SK-N-SH (cell line): ENCODE measurements at regions of chr3 and their contacts with region 1.

Region 1: GRCh38 chr3:17412950-17413530 is 329.4 kb downstream of the TBC1D5 start:
- DNase-seq: peak; percentile 20
- H3K4me3 ChIP-seq: no peak overlapping the region; a peak in 1 of 4 replicates
- H3K27ac ChIP-seq: no peak overlapping the region
- H3K4me1 ChIP-seq: no peaks in the 10 kb centered on the region; a peak in 1 of 4 replicates
- H3K27me3 ChIP-seq: no peaks in the 10 kb centered on the region
- CTCF ChIP-seq: peak; percentile 85
- EP300 ChIP-seq: no peak
- RAD21 ChIP-seq: peak; percentile 79

Region 2: DNA sequence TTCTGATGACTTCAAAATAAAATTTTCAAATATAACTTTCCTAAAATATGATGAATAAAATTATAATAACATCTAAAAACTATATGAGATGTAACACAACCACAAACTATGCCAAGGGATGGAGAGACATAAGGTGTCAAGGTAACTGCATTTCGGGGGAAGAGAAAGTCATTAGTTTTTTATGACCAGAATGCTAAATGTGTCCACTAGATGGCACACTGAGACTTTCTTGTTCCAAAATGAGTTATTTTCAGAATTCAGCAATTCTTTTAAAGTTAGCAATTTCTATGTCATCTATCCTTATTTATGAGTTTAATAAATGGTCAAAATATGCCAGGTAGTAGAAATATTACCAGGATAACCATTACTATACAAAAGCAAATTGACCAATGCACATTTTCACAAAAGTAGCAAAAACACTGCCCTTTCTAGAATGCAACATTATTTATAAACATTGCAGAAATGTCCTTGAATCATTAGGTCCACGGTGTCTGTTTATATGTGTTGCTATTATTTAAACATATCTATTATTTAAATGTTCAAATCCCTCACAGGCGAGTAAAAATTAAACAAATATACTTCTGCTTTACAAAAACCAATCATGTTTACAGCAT is 154.1 kb before region 1 on chr3:
- CTCF ChIA-PET with region 1: interaction called, 11 read pairs
- POLR2A ChIA-PET with region 1: no interaction called
- DNase-seq: peak; percentile 38
- H3K4me3 ChIP-seq: no peak overlapping the region; a peak in 1 of 4 replicates
- H3K27ac ChIP-seq: no peak overlapping the region
- H3K4me1 ChIP-seq: no peaks in the 10 kb centered on the region; a peak in 1 of 4 replicates
- H3K27me3 ChIP-seq: no peaks in the 10 kb centered on the region
- CTCF ChIP-seq: peak; percentile 84
- EP300 ChIP-seq: no peak
- RAD21 ChIP-seq: peak; percentile 79

Region 3: GRCh38 chr3:17529677-17530076 is 116.6 kb after region 1 on chr3:
- CTCF ChIA-PET with region 1: no interaction called
- POLR2A ChIA-PET with region 1: no interaction called
- DNase-seq: no peak
- H3K4me3 ChIP-seq: no peak overlapping the region
- H3K27ac ChIP-seq: no peak overlapping the region
- H3K4me1 ChIP-seq: no peaks in the 10 kb centered on the region
- H3K27me3 ChIP-seq: no peaks in the 10 kb centered on the region
- CTCF ChIP-seq: no peak
- EP300 ChIP-seq: no peak
- RAD21 ChIP-seq: no peak